Common myeloid progenitor, CD34-positive (primary cell): ENCODE measurements at regions of chrX and their contacts with region 1.

Region 1: DNA sequence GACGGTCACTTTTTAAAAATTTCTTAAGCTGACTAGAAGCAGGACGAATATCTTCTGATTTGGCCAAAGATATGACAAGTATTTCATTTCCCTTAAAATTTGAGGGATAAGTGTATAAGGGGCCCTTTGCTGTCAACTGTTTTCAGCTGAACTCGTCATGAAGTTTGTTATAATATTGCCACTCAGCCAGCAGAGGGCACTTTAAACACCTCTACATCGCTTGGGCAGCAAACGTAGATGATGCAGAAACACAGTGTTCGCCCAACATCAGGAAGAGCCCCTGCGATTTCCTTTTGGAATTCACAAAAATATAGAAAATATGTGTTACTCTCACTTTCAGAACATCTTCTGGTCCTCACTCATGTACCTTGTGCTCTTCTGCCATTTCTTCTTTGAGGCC is 435.7 kb upstream of the FMR1 start:
- DNase-seq: peak; percentile 25 to 56 (median 47)
- H3K4me3 ChIP-seq: no peak overlapping the region
- H3K27ac ChIP-seq: no peak overlapping the region
- H3K4me1 ChIP-seq: no peaks in the 10 kb centered on the region
- H3K27me3 ChIP-seq: no peaks in the 10 kb centered on the region

Region 2: GRCh38 chrX:147803948-147804347 is 327.9 kb after region 1 on chrX:
- CTCF ChIA-PET with region 1: interaction called, 18 read pairs
- POLR2A ChIA-PET with region 1: no interaction called
- DNase-seq: peak; percentile 27 to 59 (median 52)
- H3K4me3 ChIP-seq: no peak overlapping the region
- H3K27ac ChIP-seq: no peak overlapping the region
- H3K4me1 ChIP-seq: no peaks in the 10 kb centered on the region
- H3K27me3 ChIP-seq: no peaks in the 10 kb centered on the region